H1 (cell line): ENCODE measurements at regions of chr5 and their contacts with region 1.

Region 1: DNA sequence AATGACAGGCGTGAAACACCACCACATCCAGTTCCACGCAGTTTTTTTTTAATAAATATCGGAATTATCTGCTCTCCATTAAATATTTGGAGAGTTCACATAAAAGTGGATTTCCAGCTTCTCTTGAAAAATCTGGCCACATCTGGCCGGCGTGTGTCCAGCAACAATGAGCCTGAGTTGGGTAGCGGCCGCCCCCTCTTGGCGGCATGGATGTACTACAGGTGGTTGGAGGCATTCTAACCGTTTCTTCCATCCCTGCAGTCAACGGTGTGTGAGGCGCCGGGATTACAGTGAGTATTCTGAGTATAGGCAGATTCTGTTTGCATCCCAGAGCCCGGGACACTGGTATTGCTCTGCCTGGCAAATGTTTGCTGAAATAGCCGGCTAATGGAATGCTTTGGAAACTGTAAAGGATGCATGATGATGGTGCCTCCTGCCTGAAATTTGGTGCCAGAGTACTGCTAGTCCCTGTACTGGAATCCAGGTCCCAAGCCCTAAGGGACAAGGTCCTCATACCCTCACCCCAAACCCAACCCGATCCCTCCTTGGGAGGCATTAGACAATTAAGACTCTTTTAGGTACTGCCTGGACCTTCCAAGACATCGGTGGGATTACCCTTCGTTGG is 13.6 kb upstream of the GM2A start:
- DNase-seq: peak in 1 of 2 experiments; percentile 89
- H3K4me3 ChIP-seq: no peak overlapping the region
- H3K27ac ChIP-seq: no peak overlapping the region
- H3K4me1 ChIP-seq: peaks cover 3 to 11% (median 7%) of the 10 kb centered on the region in 4 experiments; a peak in 6 of 7 replicates
- H3K27me3 ChIP-seq: no peaks in the 10 kb centered on the region
- CTCF ChIP-seq: peak; percentile 86 to 94 (median 87)
- EP300 ChIP-seq: no peak
- POLR2A ChIP-seq: no peak
- RAD21 ChIP-seq: peak; percentile 82 to 89

Region 2: DNA sequence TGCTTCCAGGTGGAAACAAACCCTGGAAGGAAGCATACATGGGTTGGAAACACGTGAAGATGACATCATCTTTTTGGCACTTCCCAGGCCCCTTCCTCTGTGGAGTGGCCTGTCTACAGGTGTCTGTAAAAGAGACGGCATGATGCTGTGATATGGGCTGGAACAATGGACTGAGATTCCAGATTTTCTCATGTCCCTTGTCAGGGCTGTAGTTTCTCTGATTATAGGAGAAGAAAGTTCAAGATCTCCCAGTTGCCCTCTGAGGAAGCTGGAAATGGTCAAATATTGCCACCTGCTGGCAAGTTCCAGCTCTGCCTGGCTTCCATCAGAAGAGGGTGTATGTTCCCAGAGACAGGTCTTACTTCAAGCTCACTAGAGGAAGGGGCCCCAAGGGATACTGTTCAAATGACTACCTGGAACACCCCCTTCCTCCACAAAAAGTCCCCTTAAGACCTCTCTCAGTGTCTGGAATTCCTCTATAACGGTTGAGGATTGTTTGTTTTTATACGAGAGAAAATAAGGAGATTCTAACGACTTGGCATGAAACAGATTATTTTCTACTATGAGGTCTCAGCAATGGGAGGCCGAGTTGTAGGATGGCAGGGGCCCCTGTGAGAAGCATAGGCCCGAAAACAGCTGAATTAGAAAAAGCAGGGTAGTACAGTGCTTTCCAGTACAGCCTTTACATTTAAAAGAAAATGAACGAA is 74.5 kb before region 1 on chr5:
- CTCF ChIA-PET with region 1: interaction called, 39 read pairs
- POLR2A ChIA-PET with region 1: no interaction called
- DNase-seq: peak in 1 of 2 experiments; percentile 85
- H3K4me3 ChIP-seq: no peak overlapping the region
- H3K27ac ChIP-seq: no peak overlapping the region
- H3K4me1 ChIP-seq: no peaks in the 10 kb centered on the region; a peak in 1 of 7 replicates
- H3K27me3 ChIP-seq: no peaks in the 10 kb centered on the region
- CTCF ChIP-seq: peak; percentile 64 to 95 (median 92)
- EP300 ChIP-seq: no peak
- POLR2A ChIP-seq: no peak
- RAD21 ChIP-seq: peak; percentile 96 to 99

Region 3: DNA sequence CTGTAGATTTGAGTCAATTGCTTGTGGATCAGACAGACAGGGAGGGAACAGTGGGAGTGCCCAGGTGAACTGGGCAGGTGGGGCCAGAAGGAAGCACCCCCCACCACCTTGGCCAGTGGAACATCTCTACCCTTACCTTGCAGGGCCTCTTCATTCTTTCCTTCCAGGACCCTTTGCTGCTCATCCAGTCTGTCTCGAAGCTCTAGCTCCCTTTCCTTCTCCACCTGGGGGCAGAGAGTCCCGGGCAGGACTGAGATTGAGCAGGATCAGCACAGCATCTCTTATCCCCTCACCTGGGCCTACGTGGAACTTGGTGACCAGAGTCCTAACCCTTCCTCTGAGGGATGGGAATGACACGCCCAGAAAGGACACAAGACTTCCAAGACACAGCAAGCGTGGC is 40.5 kb before region 1 on chr5:
- CTCF ChIA-PET with region 1: interaction called, 10 read pairs
- POLR2A ChIA-PET with region 1: no interaction called
- DNase-seq: no peak
- H3K4me3 ChIP-seq: no peak overlapping the region
- H3K27ac ChIP-seq: no peak overlapping the region
- H3K4me1 ChIP-seq: no peaks in the 10 kb centered on the region
- H3K27me3 ChIP-seq: no peaks in the 10 kb centered on the region
- CTCF ChIP-seq: no peak
- EP300 ChIP-seq: no peak
- POLR2A ChIP-seq: no peak
- RAD21 ChIP-seq: no peak

Region 4: GRCh38 chr5:151223469-151224264 is 15.7 kb before region 1 on chr5 and contains the start of gene CCDC69:
- CTCF ChIA-PET with region 1: interaction called, 75 read pairs
- POLR2A ChIA-PET with region 1: interaction called, 7 read pairs
- DNase-seq: peak in 1 of 2 experiments; percentile 85
- H3K4me3 ChIP-seq: peak within 1 kb of the TSS; percentile 53 to 73 (median 66)
- H3K27ac ChIP-seq: no peak within 1 kb of the TSS
- H3K4me1 ChIP-seq: peaks cover 2 to 12% (median 6%) of the 10 kb centered on the region in 4 experiments
- H3K27me3 ChIP-seq: peaks cover 0 to 2% (median 0%) of the 10 kb centered on the region in 4 experiments; a peak in 3 of 7 replicates
- CTCF ChIP-seq: peak in 1 of 3 experiments; percentile 24; a peak in 2 of 4 replicates
- EP300 ChIP-seq: peak in 1 of 2 experiments; percentile 62; a peak in 1 of 3 replicates
- POLR2A ChIP-seq: peak in 1 of 2 experiments; percentile 55; a peak in 2 of 3 replicates
- RAD21 ChIP-seq: peak in 1 of 2 experiments; percentile 1; a peak in 1 of 4 replicates
- total RNA-seq, gene CCDC69: 10.8 and 11.5 TPM in 2 replicates

Region 5: GRCh38 chr5:151264113-151264512 is 24.8 kb after region 1 on chr5:
- CTCF ChIA-PET with region 1: interaction called, 11 read pairs
- POLR2A ChIA-PET with region 1: no interaction called
- DNase-seq: no peak
- H3K4me3 ChIP-seq: no peak overlapping the region
- H3K27ac ChIP-seq: no peak overlapping the region
- H3K4me1 ChIP-seq: no peaks in the 10 kb centered on the region; a peak in 1 of 7 replicates
- H3K27me3 ChIP-seq: no peaks in the 10 kb centered on the region
- CTCF ChIP-seq: peak in 1 of 3 experiments; percentile 20; a peak in 1 of 4 replicates
- EP300 ChIP-seq: no peak
- POLR2A ChIP-seq: no peak
- RAD21 ChIP-seq: no peak

Region 6: DNA sequence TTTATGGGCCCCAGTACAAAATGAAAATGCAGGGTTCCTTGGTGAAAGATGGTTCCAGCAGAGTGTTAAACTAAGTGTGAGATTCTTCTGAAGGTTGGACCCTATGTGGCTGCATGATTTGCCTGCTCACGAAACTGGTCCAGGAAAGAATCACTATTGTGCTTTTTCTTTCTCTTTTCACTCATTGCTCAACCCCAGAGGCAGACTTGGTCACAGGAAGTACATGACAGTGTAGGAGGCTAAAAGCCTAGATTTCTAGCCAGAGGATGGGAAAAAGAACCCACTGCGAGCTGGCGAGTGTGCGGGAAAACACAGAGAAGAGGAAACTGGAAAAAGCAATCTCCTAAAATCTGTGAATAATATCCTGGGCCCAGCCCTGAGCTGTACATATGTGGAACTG is 89.4 kb after region 1 on chr5:
- CTCF ChIA-PET with region 1: no interaction called
- POLR2A ChIA-PET with region 1: no interaction called
- DNase-seq: no peak
- H3K4me3 ChIP-seq: no peak overlapping the region
- H3K27ac ChIP-seq: no peak overlapping the region
- H3K4me1 ChIP-seq: peaks cover 0 to 4% (median 2%) of the 10 kb centered on the region in 4 experiments; a peak in 2 of 7 replicates
- H3K27me3 ChIP-seq: no peaks in the 10 kb centered on the region
- CTCF ChIP-seq: no peak
- EP300 ChIP-seq: no peak
- POLR2A ChIP-seq: no peak
- RAD21 ChIP-seq: no peak